Heart left ventricle (tissue), 16 donors: ENCODE measurements at regions of chr18 and their contacts with region 1.

Region 1: DNA sequence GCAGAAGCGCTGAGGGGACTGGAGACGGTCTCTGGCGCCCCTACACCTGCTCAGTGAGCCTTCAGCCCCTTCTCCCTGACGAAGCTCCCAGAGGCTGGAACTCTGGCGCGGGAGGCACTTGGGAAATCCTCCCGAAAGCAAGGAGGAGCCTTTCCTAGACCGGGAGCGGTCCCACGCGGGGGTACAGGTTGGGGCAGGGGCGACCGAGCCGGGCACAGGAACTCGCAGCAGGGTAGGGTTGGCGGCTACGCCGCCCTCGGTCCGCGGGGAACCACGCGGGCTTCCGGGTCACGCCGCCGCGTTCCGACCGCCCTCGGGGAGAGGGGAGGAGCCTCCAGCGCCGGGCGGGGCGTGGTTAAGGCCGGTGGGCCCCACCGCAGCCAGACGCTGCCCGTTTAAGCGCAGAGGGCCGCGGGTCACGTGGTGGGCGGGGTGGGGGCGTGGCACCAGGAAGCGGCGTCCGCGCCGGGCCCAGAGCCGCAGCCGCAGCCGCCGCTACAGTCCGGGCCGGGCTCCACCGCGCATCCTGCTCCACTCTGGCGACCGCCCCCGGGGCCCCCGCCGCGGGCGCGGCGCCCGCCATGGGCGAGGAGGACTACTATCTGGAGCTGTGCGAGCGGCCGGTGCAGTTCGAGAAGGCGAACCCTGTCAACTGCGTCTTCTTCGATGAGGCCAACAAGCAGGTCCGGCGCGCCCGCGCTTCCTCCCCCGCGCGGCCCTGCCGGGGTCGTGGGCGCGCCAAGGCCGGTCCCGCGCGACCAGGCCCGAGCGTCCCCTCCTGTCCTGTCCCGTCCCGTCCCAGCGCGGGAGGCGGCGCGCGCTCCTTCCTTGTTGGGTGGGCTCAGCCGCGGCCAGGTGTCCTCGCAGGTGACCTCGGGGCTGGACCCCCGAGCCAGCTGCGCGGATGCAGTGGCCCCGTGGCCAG is at the start of gene RMC1:
- DNase-seq: peak; percentile 97 to 99 (median 98)
- ATAC-seq: peak; percentile 98 to 99 (median 98)
- H3K4me3 ChIP-seq: peak within 1 kb of the TSS; percentile 81 to 100 (median 98)
- H3K27ac ChIP-seq: peak within 1 kb of the TSS; percentile 82 to 96 (median 90)
- H3K4me1 ChIP-seq: peaks cover 0 to 43% (median 23%) of the 10 kb centered on the region in 12 donors
- H3K27me3 ChIP-seq: no peaks in the 10 kb centered on the region
- CTCF ChIP-seq: peak in 5 of 12 donors; percentile 8 to 41 (median 30)
- POLR2A ChIP-seq: peak; percentile 24 to 87
- total RNA-seq, gene RMC1: 12.2 to 24.2 (median 17.3) TPM

Region 2: GRCh38 chr18:23350188-23350587 is 153.1 kb before region 1 on chr18:
- intact Hi-C with region 1: no loop called
- DNase-seq: no peak
- ATAC-seq: no peak
- H3K4me3 ChIP-seq: no peak overlapping the region
- H3K27ac ChIP-seq: no peak overlapping the region
- H3K4me1 ChIP-seq: peaks cover 0 to 3% (median 0%) of the 10 kb centered on the region in 12 donors
- H3K27me3 ChIP-seq: no peaks in the 10 kb centered on the region
- CTCF ChIP-seq: no peak
- POLR2A ChIP-seq: no peak

Region 3: DNA sequence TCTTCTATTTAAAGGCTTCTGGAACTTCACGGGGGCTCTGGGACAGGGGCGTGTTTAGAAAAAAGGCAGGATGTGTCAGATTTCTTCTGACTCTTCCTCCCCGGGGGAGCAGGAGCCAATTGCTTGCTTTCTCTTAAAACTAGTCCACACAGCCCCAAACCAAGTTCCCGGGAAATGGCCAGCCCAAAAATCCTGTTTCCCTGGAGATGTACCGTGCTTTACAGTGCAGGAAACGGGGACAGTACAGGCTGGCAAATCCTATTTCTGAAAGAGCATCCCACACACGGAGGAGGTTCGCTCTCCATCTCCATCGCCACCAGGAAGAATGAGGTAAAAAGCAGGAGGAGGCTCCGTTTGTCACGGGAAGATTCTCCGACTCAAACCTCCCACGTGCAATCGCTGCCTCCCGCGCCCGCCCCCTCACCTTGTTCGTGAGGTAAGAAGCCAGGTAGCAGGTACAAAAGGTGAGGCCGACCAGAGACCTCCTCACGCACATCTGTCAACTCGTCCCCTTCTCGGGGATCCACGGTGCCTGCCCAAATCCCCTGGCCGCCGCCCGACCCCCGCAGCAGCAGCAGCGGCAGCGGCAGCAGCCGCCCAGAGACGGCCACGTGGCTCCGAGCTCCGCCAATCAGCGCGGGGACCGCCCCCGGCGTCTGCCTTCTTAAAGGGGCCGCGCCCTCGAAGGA is 65.8 kb before region 1 on chr18:
- intact Hi-C with region 1: loop called in 3 of 10 experiments (anchors 5 kb)
- DNase-seq: peak; percentile 83 to 92 (median 87)
- ATAC-seq: peak; percentile 92 to 97 (median 96)
- H3K4me3 ChIP-seq: peak overlapping the region; percentile 45 to 89 (median 76)
- H3K27ac ChIP-seq: peak overlapping the region in 11 of 12 donors; percentile 23 to 80 (median 61)
- H3K4me1 ChIP-seq: peaks cover 0 to 28% (median 7%) of the 10 kb centered on the region in 12 donors
- H3K27me3 ChIP-seq: no peaks in the 10 kb centered on the region
- CTCF ChIP-seq: no peak
- POLR2A ChIP-seq: peak in 1 of 2 donors; percentile 25

Region 4: GRCh38 chr18:23452728-23453679 is 50.3 kb before region 1 on chr18 and contains the start of gene RIOK3:
- intact Hi-C with region 1: loop called in 3 of 10 experiments (anchors 1 to 5 kb)
- DNase-seq: peak; percentile 98 to 99 (median 99)
- ATAC-seq: peak; percentile 98 to 99 (median 99)
- H3K4me3 ChIP-seq: peak within 1 kb of the TSS; percentile 75 to 95 (median 93)
- H3K27ac ChIP-seq: peak within 1 kb of the TSS; percentile 76 to 96 (median 93)
- H3K4me1 ChIP-seq: peaks cover 0 to 51% (median 37%) of the 10 kb centered on the region in 12 donors
- H3K27me3 ChIP-seq: no peaks in the 10 kb centered on the region
- CTCF ChIP-seq: no peak
- POLR2A ChIP-seq: peak; percentile 31 to 92
- total RNA-seq, gene RIOK3: 43.4 to 76.2 (median 51.1) TPM

Region 5: GRCh38 chr18:23586249-23587196 is 83.2 kb after region 1 on chr18 and contains the start of gene NPC1:
- intact Hi-C with region 1: loop called in 5 of 10 experiments (anchors 1 to 5 kb)
- DNase-seq: peak; percentile 94 to 98 (median 96)
- ATAC-seq: peak; percentile 98 to 99 (median 98)
- H3K4me3 ChIP-seq: peak within 1 kb of the TSS; percentile 63 to 99 (median 84)
- H3K27ac ChIP-seq: peak within 1 kb of the TSS; percentile 94 to 100 (median 98)
- H3K4me1 ChIP-seq: peaks cover 0 to 38% (median 25%) of the 10 kb centered on the region in 12 donors
- H3K27me3 ChIP-seq: peaks cover 0 to 2% (median 0%) of the 10 kb centered on the region in 9 donors
- CTCF ChIP-seq: peak; percentile 88 to 99 (median 98)
- POLR2A ChIP-seq: peak; percentile 4 to 92
- total RNA-seq, gene NPC1: 10.2 to 42.7 (median 16.8) TPM

Region 6: GRCh38 chr18:23703057-23703986 is 200.0 kb after region 1 on chr18:
- intact Hi-C with region 1: loop called in 2 of 10 experiments (anchors 10 kb)
- DNase-seq: peak in 1 of 5 donors; percentile 28
- ATAC-seq: peak; percentile 50 to 89 (median 77)
- H3K4me3 ChIP-seq: no peak overlapping the region
- H3K27ac ChIP-seq: peak overlapping the region in 2 of 12 donors; percentile 26 to 55
- H3K4me1 ChIP-seq: peaks cover 0 to 9% (median 0%) of the 10 kb centered on the region in 12 donors
- H3K27me3 ChIP-seq: no peaks in the 10 kb centered on the region
- CTCF ChIP-seq: peak; percentile 38 to 74 (median 56)
- POLR2A ChIP-seq: no peak